ENCODE measurements at regions of chr2 and their contacts with region 1.

Region 1: DNA sequence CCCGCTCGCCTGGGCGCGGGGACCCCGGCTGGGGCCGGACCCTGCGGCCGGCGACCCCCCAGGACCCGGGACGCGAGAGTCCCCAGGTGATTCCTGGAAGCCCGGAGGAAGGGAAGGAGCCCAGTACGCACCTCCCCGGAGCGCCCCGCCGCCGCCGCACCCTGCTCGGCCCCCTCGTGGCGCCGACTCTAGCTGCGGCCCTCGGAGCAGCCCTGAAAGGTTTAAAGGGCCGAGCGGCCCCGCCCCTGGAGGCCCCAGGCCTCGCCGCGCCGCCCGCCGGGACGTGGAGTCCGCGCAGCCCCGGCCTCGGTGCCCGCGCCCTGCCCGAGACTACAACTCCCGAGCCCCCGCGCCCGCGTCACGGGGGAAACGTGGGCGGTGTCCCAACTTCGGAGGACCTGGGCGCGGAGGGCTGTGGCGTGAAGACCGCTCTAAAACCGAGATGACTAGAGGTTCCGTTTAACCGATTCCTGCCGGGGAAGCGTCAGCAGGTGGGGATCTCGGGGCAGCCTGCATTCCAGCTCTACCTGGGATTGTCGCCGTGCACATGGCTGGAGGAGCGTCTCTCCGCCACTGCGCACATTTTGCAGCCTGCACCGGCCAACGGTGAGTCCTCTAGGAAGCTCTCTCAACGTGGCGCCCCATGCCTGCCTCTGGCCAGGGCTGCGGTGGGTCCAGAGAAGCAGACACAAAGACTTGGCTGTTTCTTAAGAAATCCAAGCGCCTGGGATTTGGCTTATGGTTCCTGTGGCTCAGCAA is at the start of gene TMEM150A:
- DNase-seq: peak; percentile 97
- ATAC-seq: peak; percentile 96
- total RNA-seq, gene TMEM150A: 15.8 TPM

Region 2: DNA sequence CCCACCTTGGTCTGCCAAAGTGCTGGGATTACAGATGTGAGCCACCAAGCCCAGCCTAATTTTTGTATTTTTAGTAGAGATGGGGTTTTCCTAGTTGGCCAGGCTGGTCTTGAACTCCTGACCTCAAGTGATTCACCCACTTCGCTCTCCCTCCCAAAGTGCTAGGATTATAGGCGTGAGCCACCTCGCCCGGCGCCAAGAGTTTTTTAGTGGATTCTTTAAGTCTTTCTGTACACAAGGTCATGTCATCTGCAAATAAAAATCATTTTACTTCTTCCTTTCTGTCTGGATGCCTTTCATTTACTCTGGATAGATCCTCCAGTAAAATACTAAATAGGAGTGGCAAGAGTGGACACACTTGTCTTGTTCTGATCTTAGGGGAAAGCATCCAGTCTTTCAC is 570.0 kb before region 1 on chr2:
- intact Hi-C with region 1: loop called (anchors 10 kb)
- DNase-seq: no peak
- ATAC-seq: no peak

Region 3: GRCh38 chr2:85826990-85827878 is 224.6 kb after region 1 on chr2:
- intact Hi-C with region 1: no loop called
- DNase-seq: peak; percentile 89
- ATAC-seq: peak; percentile 96